Ascending aorta (tissue), 2 donors: ENCODE measurements at regions of chr6 and their contacts with region 1.

Region 1: GRCh38 chr6:107114213-107114905 is 956 bp downstream of the BEND3 start:
- DNase-seq: peak in 1 of 2 donors; percentile 89
- H3K4me3 ChIP-seq: peak overlapping the region; percentile 90 to 97
- H3K27ac ChIP-seq: peak overlapping the region; percentile 34 to 85
- H3K4me1 ChIP-seq: peaks cover 9 to 11% of the 10 kb centered on the region in 2 donors
- H3K27me3 ChIP-seq: no peaks in the 10 kb centered on the region
- CTCF ChIP-seq: peak; percentile 45 to 85 (median 73)

Region 2: GRCh38 chr6:105492706-105493673 is 1621.4 kb before region 1 on chr6:
- intact Hi-C with region 1: no loop called
- DNase-seq: no peak
- H3K4me3 ChIP-seq: no peak overlapping the region
- H3K27ac ChIP-seq: no peak overlapping the region
- H3K4me1 ChIP-seq: no peaks in the 10 kb centered on the region
- H3K27me3 ChIP-seq: no peaks in the 10 kb centered on the region
- CTCF ChIP-seq: no peak

Region 3: GRCh38 chr6:106963544-106963943 is 150.8 kb before region 1 on chr6:
- intact Hi-C with region 1: no loop called
- DNase-seq: no peak
- H3K4me3 ChIP-seq: no peak overlapping the region
- H3K27ac ChIP-seq: no peak overlapping the region
- H3K4me1 ChIP-seq: no peaks in the 10 kb centered on the region
- H3K27me3 ChIP-seq: no peaks in the 10 kb centered on the region
- CTCF ChIP-seq: no peak

Region 4: DNA sequence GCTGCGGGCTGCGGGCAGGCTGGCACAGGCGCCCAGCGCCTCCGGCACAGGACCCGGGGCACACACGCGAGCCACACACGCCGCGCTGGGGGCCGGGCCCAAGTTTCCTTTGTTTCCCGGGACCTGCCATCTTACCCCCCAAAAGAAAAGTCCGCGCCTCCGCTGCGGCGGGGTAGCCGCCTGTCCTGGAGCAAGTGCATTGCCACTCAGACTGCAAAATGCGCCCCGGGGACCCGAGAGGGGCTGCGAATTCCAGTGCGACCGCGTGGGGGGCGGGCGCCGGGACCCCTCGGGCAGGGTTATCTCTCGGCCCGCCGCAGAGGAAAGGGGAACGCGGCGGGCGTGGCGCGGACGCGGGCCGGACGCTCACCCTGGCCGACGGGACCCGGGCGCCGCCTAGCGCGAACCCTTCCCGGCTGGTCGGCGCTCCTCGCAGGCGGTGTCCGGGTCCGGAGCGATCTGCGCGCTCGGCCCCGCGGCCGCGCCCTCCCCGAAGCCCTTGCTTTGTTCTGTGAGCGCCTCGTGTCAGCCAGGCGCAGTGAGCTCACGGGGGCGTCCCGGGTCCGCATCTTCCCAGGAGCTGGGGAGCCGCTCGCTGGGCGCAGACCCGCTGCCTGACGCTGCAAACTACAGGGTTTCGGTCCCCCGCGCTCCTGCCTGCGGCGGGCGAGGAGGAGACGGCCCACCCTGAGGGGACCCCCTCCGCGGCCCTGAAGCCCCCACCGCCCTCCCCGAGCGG is 139.2 kb before region 1 on chr6:
- intact Hi-C with region 1: no loop called
- DNase-seq: no peak
- H3K4me3 ChIP-seq: peak overlapping the region; percentile 62 to 68
- H3K27ac ChIP-seq: no peak overlapping the region
- H3K4me1 ChIP-seq: peaks cover 10 to 15% of the 10 kb centered on the region in 2 donors
- H3K27me3 ChIP-seq: peaks cover 5% of the 10 kb centered on the region
- CTCF ChIP-seq: no peak

Region 5: DNA sequence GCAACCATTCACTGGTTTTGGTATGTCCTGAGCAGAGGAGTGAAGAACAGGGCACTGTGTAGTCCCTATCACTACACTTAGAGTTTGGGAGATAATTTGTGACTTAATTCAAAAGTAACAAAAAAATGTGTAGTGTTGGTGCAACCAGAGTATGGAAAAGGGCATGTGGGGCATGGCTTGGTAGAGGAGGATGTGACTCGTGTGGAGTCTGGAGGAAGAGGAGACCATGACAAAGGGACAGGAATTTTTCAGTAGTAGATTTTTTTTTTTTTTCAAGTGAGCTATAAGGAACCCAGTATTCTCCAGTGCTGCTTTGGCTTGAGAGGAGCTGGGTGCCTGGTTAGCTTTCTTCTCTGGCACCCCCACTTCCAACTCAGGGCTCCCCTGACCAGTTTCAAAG is 81.2 kb before region 1 on chr6:
- intact Hi-C with region 1: loop called (anchors 1 kb)
- DNase-seq: no peak
- H3K4me3 ChIP-seq: no peak overlapping the region
- H3K27ac ChIP-seq: no peak overlapping the region
- H3K4me1 ChIP-seq: peaks cover 0 to 9% of the 10 kb centered on the region in 2 donors
- H3K27me3 ChIP-seq: no peaks in the 10 kb centered on the region
- CTCF ChIP-seq: no peak

Region 6: GRCh38 chr6:107361753-107362604 is 247.6 kb after region 1 on chr6:
- intact Hi-C with region 1: no loop called
- DNase-seq: no peak
- H3K4me3 ChIP-seq: no peak overlapping the region
- H3K27ac ChIP-seq: no peak overlapping the region
- H3K4me1 ChIP-seq: no peaks in the 10 kb centered on the region
- H3K27me3 ChIP-seq: no peaks in the 10 kb centered on the region
- CTCF ChIP-seq: no peak